Left cardiac atrium (tissue), 4 donors: ENCODE measurements at regions of chr3 and their contacts with region 1.

Region 1: GRCh38 chr3:122942937-122943827 is 84.4 kb downstream of the SEMA5B start:
- DNase-seq: peak; percentile 75
- ATAC-seq: peak; percentile 82 to 89

Region 2: GRCh38 chr3:122975163-122975923 is 32.2 kb after region 1 on chr3:
- intact Hi-C with region 1: no loop called
- DNase-seq: no peak
- ATAC-seq: peak; percentile 10 to 73

Region 3: DNA sequence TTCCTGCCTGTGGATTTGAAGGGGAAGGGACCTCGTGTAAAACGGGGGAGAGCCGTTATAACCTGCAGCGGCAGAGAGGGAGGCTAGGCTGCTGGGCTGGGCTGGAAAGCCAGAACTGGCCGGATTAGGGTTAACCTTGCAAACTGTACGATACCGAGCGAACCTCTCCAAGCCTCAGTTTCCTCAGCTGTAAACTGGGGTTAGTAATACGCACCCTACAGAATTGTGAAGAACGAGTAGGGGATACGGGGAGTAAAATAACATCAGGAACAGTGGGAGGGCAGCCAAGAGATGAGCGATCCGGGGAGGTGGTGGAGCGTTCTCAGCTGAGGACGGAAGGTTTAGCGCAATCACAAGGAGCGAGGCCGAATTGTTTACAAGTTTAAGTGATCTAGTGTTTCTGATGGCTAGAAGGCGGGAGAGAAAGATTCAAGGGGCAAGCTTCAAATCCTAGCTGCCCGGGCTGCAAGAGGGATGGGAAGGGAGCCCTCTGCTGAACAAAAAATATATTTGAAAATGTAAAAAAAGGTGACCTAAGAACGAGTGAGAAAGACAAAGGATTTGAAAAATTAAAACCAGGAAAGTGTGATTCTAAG is 85.1 kb after region 1 on chr3:
- intact Hi-C with region 1: loop called (anchors 2 to 5 kb)
- DNase-seq: peak; percentile 24
- ATAC-seq: peak; percentile 51 to 60

Region 4: GRCh38 chr3:123258811-123259420 is 315.7 kb after region 1 on chr3:
- intact Hi-C with region 1: loop called (anchors 10 kb)
- DNase-seq: no peak
- ATAC-seq: peak; percentile 70 to 80

Region 5: GRCh38 chr3:123267821-123268220 is 324.6 kb after region 1 on chr3:
- intact Hi-C with region 1: loop called in 1 of 2 experiments (anchors 10 kb)
- DNase-seq: no peak
- ATAC-seq: no peak